Heart right ventricle (tissue), 16 donors: ENCODE measurements at regions of chr2 and their contacts with region 1.

Region 1: DNA sequence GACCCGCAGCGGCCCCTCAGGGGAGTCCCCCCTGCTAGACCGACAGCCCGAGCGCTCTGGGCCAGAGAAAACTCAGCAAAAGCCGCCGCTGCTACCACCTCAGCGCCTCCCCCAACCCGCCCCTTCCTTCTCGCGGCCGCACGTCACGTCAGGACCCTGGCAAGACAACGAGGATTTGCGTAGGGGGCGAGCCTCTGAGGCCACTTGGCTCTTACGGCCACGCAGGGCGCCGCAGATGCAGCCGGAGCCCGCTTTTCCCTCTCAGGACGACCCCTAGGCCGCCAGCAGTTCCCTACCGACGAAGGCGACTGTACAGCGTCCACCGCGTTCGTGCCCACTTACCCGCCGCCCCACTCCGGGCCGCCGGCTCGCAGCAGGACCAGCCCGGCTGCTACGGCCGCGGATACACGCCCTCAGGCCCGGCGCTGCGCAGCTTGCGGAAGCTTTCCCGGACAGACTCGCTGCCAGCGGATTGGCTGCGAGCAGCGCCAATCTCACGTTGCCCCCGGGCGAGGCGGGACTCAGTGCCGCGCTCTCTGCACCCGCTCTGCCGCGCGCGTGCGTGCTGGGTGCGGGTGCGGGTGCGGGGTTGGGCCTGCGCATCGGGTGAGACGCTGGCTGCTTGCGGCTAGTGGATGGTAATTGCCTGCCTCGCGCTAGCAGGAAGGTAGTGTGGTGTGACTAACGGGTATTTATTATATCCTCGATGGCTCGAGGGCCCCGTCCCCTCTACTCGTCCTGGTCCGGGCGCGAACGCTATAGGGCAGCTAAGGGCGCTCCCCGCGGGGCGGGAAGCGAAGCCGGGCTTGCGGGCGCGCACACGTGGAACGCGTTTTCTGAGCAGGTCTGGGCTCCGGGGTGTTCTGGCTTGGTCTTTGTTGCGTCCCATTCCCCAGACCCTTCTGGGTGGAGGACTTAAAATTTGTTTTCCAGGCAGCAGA is at the starts of genes ORMDL1 and PMS1:
- DNase-seq: peak; percentile 95 to 97
- ATAC-seq: peak; percentile 99 to 100 (median 99)
- H3K4me3 ChIP-seq: peak within 1 kb of the TSS; percentile 51 to 91 (median 78)
- H3K27ac ChIP-seq: peak within 1 kb of the TSS; percentile 83 to 98 (median 96)
- H3K4me1 ChIP-seq: peaks cover 7 to 55% (median 38%) of the 10 kb centered on the region in 9 donors
- H3K27me3 ChIP-seq: no peaks in the 10 kb centered on the region
- CTCF ChIP-seq: no peak
- total RNA-seq, gene ORMDL1: 18.1 to 29.3 (median 23.5) TPM
- total RNA-seq, gene PMS1: 7.0 to 15.1 (median 11.5) TPM

Region 2: GRCh38 chr2:189613077-189613636 is 171.0 kb before region 1 on chr2:
- intact Hi-C with region 1: no loop called
- DNase-seq: peak in 1 of 2 donors; percentile 71
- ATAC-seq: peak; percentile 94 to 98 (median 96)
- H3K4me3 ChIP-seq: peak overlapping the region in 8 of 10 donors; percentile 6 to 40 (median 29)
- H3K27ac ChIP-seq: peak overlapping the region; percentile 53 to 84 (median 80)
- H3K4me1 ChIP-seq: peaks cover 0 to 33% (median 23%) of the 10 kb centered on the region in 9 donors
- H3K27me3 ChIP-seq: no peaks in the 10 kb centered on the region
- CTCF ChIP-seq: no peak

Region 3: DNA sequence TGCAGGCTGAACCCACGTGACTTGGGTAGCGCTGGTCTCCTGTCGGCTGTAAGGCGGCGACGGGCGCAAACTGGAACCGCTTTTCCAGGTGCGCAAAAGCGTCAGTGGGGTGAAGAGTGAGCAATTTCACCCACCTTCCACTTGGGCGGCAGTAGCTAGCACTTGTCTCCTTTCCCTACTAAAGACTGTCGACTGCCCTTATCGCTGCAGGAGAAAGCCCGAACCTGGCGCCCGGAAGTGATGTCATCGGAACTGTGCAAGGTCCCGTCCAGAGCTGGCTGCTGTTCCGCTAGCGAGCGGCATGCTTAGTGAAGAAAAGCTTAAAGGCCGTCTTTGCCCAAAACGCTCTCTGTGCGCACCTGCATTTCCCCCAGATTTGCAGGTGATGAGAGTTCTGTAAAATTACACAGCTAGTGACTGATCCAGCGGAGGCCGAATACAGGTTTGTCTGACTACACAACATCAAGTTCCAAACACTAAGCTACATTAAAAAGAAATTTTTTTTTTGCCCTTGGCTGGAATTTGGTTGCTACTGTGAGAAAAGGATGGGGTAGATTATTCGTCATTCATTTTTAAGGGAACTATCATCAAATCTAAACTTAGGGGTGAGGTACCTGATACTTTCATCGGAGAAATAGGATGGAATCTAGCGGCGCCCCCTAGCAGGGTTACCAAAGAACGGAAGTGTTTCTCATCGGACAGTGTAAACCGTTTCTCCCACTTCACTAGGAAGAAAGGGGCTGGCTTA is 21.5 kb before region 1 on chr2 and contains the start of gene OSGEPL1:
- intact Hi-C with region 1: loop called in 3 of 10 experiments (anchors 1 to 2 kb)
- DNase-seq: peak; percentile 90 to 94
- ATAC-seq: peak; percentile 95 to 99 (median 98)
- H3K4me3 ChIP-seq: peak within 1 kb of the TSS; percentile 67 to 83 (median 78)
- H3K27ac ChIP-seq: peak within 1 kb of the TSS; percentile 30 to 92 (median 87)
- H3K4me1 ChIP-seq: peaks cover 0 to 25% (median 16%) of the 10 kb centered on the region in 9 donors
- H3K27me3 ChIP-seq: no peaks in the 10 kb centered on the region
- CTCF ChIP-seq: peak in 8 of 9 donors; percentile 11 to 72 (median 52)
- total RNA-seq, gene OSGEPL1: 5.8 to 14.1 (median 9.9) TPM

Region 4: GRCh38 chr2:189876271-189876670 is 92.1 kb after region 1 on chr2:
- intact Hi-C with region 1: no loop called
- DNase-seq: no peak
- ATAC-seq: peak in 1 of 8 donors; percentile 56
- H3K4me3 ChIP-seq: no peak overlapping the region
- H3K27ac ChIP-seq: no peak overlapping the region
- H3K4me1 ChIP-seq: peaks cover 0 to 10% (median 0%) of the 10 kb centered on the region in 9 donors
- H3K27me3 ChIP-seq: no peaks in the 10 kb centered on the region
- CTCF ChIP-seq: no peak